H1 (cell line): ENCODE measurements at regions of chr15 and their contacts with region 1.

Region 1: DNA sequence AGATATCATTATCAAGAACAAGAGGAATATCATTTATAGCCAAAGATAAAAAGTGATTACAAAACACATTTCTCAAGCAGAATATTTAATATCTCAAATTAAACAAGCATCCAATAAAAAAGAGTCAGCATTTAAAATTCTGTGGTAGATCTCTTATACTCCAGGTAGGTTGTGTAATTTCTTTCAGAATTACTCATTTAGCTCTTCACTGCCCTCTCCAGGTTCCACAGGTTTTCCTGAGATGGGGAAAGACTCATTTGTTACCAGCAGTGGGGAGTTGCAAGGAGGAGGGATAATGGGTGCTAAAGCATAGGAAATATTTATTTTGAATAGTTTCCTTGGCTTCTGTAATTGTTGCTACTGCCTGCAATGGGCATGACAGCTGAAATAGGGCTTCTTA is 83.1 kb upstream of the RASGRP1 start:
- DNase-seq: no peak
- H3K4me3 ChIP-seq: no peak overlapping the region
- H3K27ac ChIP-seq: no peak overlapping the region
- H3K4me1 ChIP-seq: peaks cover 0 to 1% (median 0%) of the 10 kb centered on the region in 4 experiments; a peak in 1 of 7 replicates
- H3K27me3 ChIP-seq: no peaks in the 10 kb centered on the region
- CTCF ChIP-seq: peak in 2 of 3 experiments; percentile 41 to 44; a peak in 3 of 4 replicates
- EP300 ChIP-seq: no peak
- POLR2A ChIP-seq: no peak
- RAD21 ChIP-seq: peak; percentile 50 to 54

Region 2: GRCh38 chr15:38294126-38294525 is 353.6 kb before region 1 on chr15:
- CTCF ChIA-PET with region 1: no interaction called
- POLR2A ChIA-PET with region 1: no interaction called
- DNase-seq: no peak
- H3K4me3 ChIP-seq: no peak overlapping the region
- H3K27ac ChIP-seq: no peak overlapping the region
- H3K4me1 ChIP-seq: no peaks in the 10 kb centered on the region; a peak in 1 of 7 replicates
- H3K27me3 ChIP-seq: no peaks in the 10 kb centered on the region
- CTCF ChIP-seq: no peak
- EP300 ChIP-seq: no peak
- POLR2A ChIP-seq: no peak
- RAD21 ChIP-seq: no peak

Region 3: DNA sequence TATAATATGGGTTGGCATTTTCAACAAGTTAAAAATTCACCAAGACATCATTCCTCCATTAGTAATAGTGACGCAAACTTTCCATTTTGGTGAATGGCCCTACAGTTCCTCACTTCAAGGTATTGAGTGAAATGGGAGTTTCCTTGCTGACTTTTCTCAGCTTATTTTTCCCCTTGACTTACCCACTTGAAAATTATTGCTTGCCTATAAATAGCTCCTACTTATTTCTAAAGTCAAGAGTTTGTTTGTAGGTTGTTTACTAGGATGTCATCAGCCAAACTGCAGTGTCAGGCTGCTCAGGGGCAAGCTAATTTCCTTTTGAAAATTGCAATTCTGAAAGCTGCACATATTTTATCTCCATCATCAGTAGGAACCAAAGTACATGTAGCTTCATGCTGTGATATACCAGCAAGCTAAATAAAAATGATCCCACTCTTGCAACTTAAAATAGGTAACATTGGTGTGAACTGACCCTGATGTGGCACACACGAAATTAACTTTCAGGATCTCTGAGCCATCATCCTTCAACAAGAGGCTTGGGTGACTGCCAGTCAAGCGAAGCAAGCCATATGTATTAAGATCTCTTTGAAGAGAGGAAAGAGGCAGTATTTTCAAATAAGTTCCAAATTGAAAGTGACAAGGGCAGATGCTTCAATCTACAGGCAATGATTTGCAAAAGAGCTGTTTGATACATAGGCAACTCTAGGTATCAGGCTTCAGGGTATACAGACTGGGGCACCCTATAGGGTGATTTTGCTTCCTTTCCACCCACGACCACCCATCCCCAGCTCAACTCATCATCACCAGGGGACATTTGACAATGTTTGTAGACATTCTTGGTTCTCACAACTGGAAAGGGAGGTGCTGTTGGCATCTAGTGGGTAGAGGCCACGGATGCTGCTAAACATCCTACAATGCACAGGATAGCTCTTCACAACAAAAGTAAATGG is 16.3 kb before region 1 on chr15:
- CTCF ChIA-PET with region 1: interaction called, 15 read pairs
- POLR2A ChIA-PET with region 1: no interaction called
- DNase-seq: no peak
- H3K4me3 ChIP-seq: no peak overlapping the region
- H3K27ac ChIP-seq: no peak overlapping the region
- H3K4me1 ChIP-seq: no peaks in the 10 kb centered on the region
- H3K27me3 ChIP-seq: no peaks in the 10 kb centered on the region
- CTCF ChIP-seq: no peak
- EP300 ChIP-seq: no peak
- POLR2A ChIP-seq: no peak
- RAD21 ChIP-seq: no peak

Region 4: DNA sequence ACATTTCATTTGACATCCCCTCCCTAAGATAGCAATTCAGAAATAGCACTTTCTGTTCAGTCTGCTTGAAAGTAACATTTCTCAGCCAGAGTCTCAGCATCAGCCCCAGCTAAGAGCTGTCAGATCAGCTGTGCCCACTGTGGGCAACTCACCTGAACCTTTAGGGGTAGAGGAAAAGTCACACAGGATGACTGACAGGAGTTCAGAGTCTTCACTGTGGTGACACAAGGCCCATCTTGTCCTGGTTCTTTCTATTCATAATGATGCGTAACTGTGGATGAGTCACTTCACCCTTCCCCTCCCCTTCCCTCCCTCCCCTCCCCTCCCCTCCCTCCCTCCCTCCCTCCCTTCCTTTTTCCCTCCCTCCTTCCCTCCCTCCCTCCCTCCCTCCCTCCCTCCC is 13.1 kb after region 1 on chr15:
- CTCF ChIA-PET with region 1: interaction called, 40 read pairs
- POLR2A ChIA-PET with region 1: no interaction called
- DNase-seq: no peak
- H3K4me3 ChIP-seq: no peak overlapping the region
- H3K27ac ChIP-seq: no peak overlapping the region
- H3K4me1 ChIP-seq: no peaks in the 10 kb centered on the region
- H3K27me3 ChIP-seq: no peaks in the 10 kb centered on the region
- CTCF ChIP-seq: no peak
- EP300 ChIP-seq: no peak
- POLR2A ChIP-seq: no peak
- RAD21 ChIP-seq: no peak

Region 5: GRCh38 chr15:38699633-38700230 is 52.0 kb after region 1 on chr15:
- CTCF ChIA-PET with region 1: interaction called, 22 read pairs
- POLR2A ChIA-PET with region 1: no interaction called
- DNase-seq: peak in 1 of 2 experiments; percentile 63
- H3K4me3 ChIP-seq: no peak overlapping the region
- H3K27ac ChIP-seq: no peak overlapping the region
- H3K4me1 ChIP-seq: peaks cover 0 to 6% (median 3%) of the 10 kb centered on the region in 4 experiments; a peak in 4 of 7 replicates
- H3K27me3 ChIP-seq: no peaks in the 10 kb centered on the region; a peak in 1 of 7 replicates
- CTCF ChIP-seq: peak; percentile 62 to 93 (median 71)
- EP300 ChIP-seq: no peak
- POLR2A ChIP-seq: no peak
- RAD21 ChIP-seq: peak; percentile 66 to 71